ENCODE measurements at regions of chr16 and their contacts with region 1.

Region 1: DNA sequence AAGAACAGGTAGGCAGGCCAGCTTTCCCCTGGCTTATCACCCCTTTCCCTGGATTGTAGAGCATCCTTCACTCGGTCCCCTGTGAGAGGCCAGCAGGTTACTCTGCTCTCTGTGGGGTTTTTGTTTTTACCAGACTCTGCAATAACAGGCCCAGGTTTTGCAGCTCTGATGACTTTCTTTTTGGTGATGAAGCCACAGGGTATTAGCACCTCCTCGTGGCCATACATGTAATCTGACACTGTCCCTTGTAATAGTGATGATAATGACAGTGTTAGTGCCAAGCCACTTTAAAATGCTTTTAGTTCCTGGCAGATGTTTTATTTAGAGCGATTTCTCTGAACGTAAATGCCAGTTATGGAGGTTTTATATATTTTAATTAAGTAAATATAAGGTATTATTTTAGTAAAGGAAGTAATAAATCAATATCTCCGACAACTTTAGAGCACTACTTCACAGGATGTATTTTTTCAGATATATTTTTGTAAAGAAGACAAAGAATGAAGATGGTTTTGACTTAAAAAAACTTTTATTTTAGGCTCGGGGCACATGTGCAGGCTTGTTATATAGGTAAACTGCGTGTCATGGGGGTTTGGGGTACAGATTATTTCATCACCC is 38.0 kb upstream of the CPHXL start:
- DNase-seq: peak; percentile 64
- H3K4me3 Mint-ChIP-seq: no peak overlapping the region
- H3K27ac Mint-ChIP-seq: no peak overlapping the region
- H3K4me1 Mint-ChIP-seq: no peaks in the 10 kb centered on the region
- H3K27me3 Mint-ChIP-seq: peaks cover 46% of the 10 kb centered on the region
- CTCF ChIP-seq: peak; percentile 75

Region 2: GRCh38 chr16:75471723-75472633 is 292.3 kb before region 1 on chr16:
- CTCF ChIA-PET with region 1: interaction called, 6 read pairs
- intact Hi-C with region 1: loop called (anchors 5 kb)
- DNase-seq: peak; percentile 64
- H3K4me3 Mint-ChIP-seq: no peak overlapping the region
- H3K27ac Mint-ChIP-seq: no peak overlapping the region
- H3K4me1 Mint-ChIP-seq: peaks cover 9% of the 10 kb centered on the region
- H3K27me3 Mint-ChIP-seq: no peaks in the 10 kb centered on the region
- CTCF ChIP-seq: peak; percentile 55

Region 3: DNA sequence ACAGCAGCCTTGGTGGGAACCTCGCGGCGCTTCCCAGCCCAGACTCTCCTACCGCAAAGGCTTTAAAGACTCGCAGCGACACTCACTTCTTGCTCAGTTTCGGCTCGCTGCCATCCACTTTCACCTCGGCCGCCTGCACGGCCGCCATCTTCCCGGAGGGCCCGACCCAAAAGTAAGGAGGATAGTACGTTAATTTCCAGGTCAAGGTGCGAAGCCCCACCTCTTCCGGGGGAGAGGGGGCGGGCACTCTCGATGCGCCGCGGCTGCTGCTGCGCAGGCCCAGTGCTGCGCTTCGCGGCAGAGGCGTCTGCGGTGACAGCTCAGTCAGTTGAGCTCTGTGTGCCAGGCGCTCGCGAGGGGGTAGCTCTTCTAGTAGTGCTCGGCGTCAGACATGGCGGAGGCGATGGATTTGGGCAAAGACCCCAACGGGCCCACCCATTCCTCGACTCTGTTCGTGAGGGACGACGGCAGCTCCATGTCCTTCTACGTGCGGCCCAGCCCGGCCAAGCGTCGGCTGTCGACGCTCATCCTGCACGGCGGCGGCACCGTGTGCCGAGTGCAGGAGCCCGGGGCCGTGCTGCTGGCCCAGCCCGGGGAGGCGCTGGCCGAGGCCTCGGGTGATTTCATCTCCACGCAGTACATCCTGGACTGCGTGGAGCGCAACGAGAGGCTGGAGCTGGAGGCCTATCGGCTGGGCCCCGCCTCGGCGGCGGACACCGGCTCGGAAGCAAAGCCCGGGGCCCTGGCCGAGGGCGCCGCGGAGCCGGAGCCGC is 116.6 kb before region 1 on chr16 and contains the starts of genes KARS1 and TERF2IP:
- CTCF ChIA-PET with region 1: interaction called, 9 read pairs
- intact Hi-C with region 1: loop called (anchors 1 kb)
- DNase-seq: peak; percentile 96
- H3K4me3 Mint-ChIP-seq: peak within 1 kb of the TSS; percentile 99
- H3K27ac Mint-ChIP-seq: peak within 1 kb of the TSS; percentile 97
- H3K4me1 Mint-ChIP-seq: peaks cover 44% of the 10 kb centered on the region
- H3K27me3 Mint-ChIP-seq: no peaks in the 10 kb centered on the region
- CTCF ChIP-seq: no peak
- total RNA-seq, gene KARS1: 198 and 207 TPM in 2 replicates
- total RNA-seq, gene TERF2IP: 45.3 and 48.3 TPM in 2 replicates

Region 4: DNA sequence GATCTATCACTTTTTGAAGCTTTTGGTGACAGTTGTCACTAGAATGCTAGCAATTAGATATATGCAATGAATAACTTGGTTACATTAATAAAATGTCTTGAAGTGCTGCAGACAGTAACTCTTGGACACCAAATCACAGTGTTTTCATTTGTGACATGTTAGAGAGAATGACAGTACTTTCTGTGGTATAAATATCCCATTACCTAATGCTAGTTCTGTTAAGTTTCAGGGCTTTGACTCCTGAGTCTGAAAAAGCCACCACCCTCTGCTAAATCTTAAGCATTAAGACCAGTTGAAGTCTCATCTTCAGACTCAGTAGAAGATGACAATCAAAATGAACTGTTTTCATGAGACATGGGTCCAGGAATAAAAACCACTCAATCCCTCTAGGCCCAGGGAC is 76.9 kb before region 1 on chr16:
- CTCF ChIA-PET with region 1: no interaction called
- intact Hi-C with region 1: no loop called
- DNase-seq: no peak
- H3K4me3 Mint-ChIP-seq: no peak overlapping the region
- H3K27ac Mint-ChIP-seq: no peak overlapping the region
- H3K4me1 Mint-ChIP-seq: no peaks in the 10 kb centered on the region
- H3K27me3 Mint-ChIP-seq: no peaks in the 10 kb centered on the region
- CTCF ChIP-seq: no peak